ENCODE measurements at regions of chr1 and their contacts with region 1.

Region 1: DNA sequence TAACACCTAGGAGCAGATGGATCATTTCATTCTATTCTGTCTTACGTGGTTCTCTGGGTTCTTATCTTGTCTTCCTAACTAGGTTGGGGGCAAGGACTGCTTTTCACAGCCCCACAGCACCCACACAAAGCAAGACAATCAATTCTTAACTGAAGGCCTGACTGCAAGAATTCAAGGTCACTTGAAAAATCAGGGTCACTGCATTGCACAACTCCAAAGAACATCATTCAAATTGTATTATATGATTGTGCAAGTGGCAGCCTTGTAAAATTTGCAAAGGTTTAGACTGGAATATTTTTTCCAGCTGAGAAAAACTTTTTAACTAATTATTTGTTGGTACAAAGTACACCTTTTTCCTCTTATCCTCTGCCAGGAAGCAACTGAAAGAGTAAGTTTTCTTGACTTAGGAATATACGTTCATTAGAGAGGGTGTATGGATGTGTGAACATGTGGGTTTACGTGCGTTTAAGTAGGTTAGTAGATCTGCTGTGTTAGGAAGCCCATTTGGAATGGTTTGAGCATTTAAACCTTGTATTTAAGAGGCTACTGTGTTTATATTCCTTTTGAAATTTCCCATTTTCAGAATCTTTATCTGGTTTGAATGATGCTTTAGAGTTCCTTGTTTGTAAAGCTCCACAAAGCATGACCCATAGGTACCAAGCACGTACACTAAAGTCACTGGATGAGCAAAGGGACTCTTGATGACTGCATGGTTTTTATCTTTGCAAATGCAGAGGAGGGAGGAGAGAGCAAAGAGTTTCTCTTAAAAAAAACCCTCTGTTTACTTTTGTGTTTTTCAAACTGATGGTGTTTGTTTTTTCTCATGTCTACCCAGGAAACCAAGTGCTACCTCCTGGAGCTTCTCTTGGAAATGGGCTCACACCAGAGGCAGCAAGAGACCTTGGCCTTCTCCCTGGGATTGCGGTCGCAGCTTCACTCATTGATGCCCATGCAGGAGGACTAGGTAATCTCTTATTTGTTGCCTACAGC is 214.9 kb downstream of the FGGY start:
- DNase-seq: peak; percentile 82
- ATAC-seq: peak; percentile 82
- H3K4me3 ChIP-seq: peak overlapping the region in 2 of 3 experiments; percentile 27 to 30; a peak in 4 of 6 replicates
- H3K27ac ChIP-seq: peak overlapping the region; percentile 82
- H3K4me1 ChIP-seq: peaks cover 93% of the 10 kb centered on the region
- H3K27me3 ChIP-seq: no peaks in the 10 kb centered on the region
- CTCF ChIP-seq: no peak
- EP300 ChIP-seq: peak; percentile 70 to 93; a peak in 3 of 4 replicates
- POLR2A ChIP-seq: no peak
- RAD21 ChIP-seq: no peak; the same call in 1 of the 2 replicates

Region 2: GRCh38 chr1:59522925-59523505 is 11.2 kb after region 1 on chr1:
- CTCF ChIA-PET with region 1: no interaction called
- POLR2A ChIA-PET with region 1: interaction called, 13 read pairs
- in situ Hi-C with region 1: no loop called
- intact Hi-C with region 1: no loop called
- DNase-seq: peak; percentile 93
- ATAC-seq: peak; percentile 93
- H3K4me3 ChIP-seq: no peak overlapping the region
- H3K27ac ChIP-seq: peak overlapping the region; percentile 57
- H3K4me1 ChIP-seq: peaks cover 32% of the 10 kb centered on the region
- H3K27me3 ChIP-seq: no peaks in the 10 kb centered on the region
- CTCF ChIP-seq: peak; percentile 59
- EP300 ChIP-seq: peak; percentile 16 to 82; a peak in 2 of 4 replicates
- POLR2A ChIP-seq: no peak
- RAD21 ChIP-seq: peak; percentile 38

Measured in HepG2 (cell line).